ENCODE measurements at regions of chr1 and their contacts with region 1.

Region 1: GRCh38 chr1:67134695-67135094 is at the start of gene C1orf141:
- DNase-seq: peak; percentile 9 to 20
- ATAC-seq: peak in 7 of 8 donors; percentile 43 to 80 (median 62)
- H3K4me3 ChIP-seq: peak within 1 kb of the TSS in 9 of 10 donors; percentile 6 to 47 (median 40)
- H3K27ac ChIP-seq: no peak within 1 kb of the TSS
- H3K4me1 ChIP-seq: peaks cover 0 to 12% (median 0%) of the 10 kb centered on the region in 9 donors
- H3K27me3 ChIP-seq: peaks cover 0 to 5% (median 0%) of the 10 kb centered on the region in 7 donors
- CTCF ChIP-seq: no peak
- total RNA-seq, gene C1orf141: not detected

Region 2: GRCh38 chr1:66840929-66841328 is 293.8 kb before region 1 on chr1:
- intact Hi-C with region 1: no loop called
- DNase-seq: no peak
- ATAC-seq: no peak
- H3K4me3 ChIP-seq: no peak overlapping the region
- H3K27ac ChIP-seq: no peak overlapping the region
- H3K4me1 ChIP-seq: no peaks in the 10 kb centered on the region
- H3K27me3 ChIP-seq: no peaks in the 10 kb centered on the region
- CTCF ChIP-seq: no peak

Region 3: GRCh38 chr1:67077593-67077992 is 57.1 kb before region 1 on chr1:
- intact Hi-C with region 1: loop called in 1 of 10 experiments (anchors 10 kb)
- DNase-seq: no peak
- ATAC-seq: no peak
- H3K4me3 ChIP-seq: no peak overlapping the region
- H3K27ac ChIP-seq: no peak overlapping the region
- H3K4me1 ChIP-seq: no peaks in the 10 kb centered on the region
- H3K27me3 ChIP-seq: no peaks in the 10 kb centered on the region
- CTCF ChIP-seq: no peak

Region 4: GRCh38 chr1:67118191-67118590 is 16.5 kb before region 1 on chr1:
- intact Hi-C with region 1: no loop called
- DNase-seq: no peak
- ATAC-seq: no peak
- H3K4me3 ChIP-seq: no peak overlapping the region
- H3K27ac ChIP-seq: no peak overlapping the region
- H3K4me1 ChIP-seq: no peaks in the 10 kb centered on the region
- H3K27me3 ChIP-seq: peaks cover 0 to 2% (median 0%) of the 10 kb centered on the region in 7 donors
- CTCF ChIP-seq: no peak